Colonic mucosa (tissue), 4 donors: ENCODE measurements at regions of chr12 and their contacts with region 1.

Region 1: GRCh38 chr12:40622246-40622838 is 69.9 kb upstream of the CNTN1 start:
- DNase-seq: peak; percentile 45
- H3K4me3 ChIP-seq: no peak overlapping the region
- H3K27ac ChIP-seq: no peak overlapping the region
- H3K4me1 ChIP-seq: no peaks in the 10 kb centered on the region
- H3K27me3 ChIP-seq: no peaks in the 10 kb centered on the region
- CTCF ChIP-seq: peak; percentile 55

Region 2: GRCh38 chr12:40921563-40922163 is 299.3 kb after region 1 on chr12:
- intact Hi-C with region 1: loop called (anchors 2 kb)
- DNase-seq: no peak
- H3K4me3 ChIP-seq: no peak overlapping the region
- H3K27ac ChIP-seq: no peak overlapping the region
- H3K4me1 ChIP-seq: no peaks in the 10 kb centered on the region
- H3K27me3 ChIP-seq: no peaks in the 10 kb centered on the region
- CTCF ChIP-seq: peak; percentile 69

Region 3: DNA sequence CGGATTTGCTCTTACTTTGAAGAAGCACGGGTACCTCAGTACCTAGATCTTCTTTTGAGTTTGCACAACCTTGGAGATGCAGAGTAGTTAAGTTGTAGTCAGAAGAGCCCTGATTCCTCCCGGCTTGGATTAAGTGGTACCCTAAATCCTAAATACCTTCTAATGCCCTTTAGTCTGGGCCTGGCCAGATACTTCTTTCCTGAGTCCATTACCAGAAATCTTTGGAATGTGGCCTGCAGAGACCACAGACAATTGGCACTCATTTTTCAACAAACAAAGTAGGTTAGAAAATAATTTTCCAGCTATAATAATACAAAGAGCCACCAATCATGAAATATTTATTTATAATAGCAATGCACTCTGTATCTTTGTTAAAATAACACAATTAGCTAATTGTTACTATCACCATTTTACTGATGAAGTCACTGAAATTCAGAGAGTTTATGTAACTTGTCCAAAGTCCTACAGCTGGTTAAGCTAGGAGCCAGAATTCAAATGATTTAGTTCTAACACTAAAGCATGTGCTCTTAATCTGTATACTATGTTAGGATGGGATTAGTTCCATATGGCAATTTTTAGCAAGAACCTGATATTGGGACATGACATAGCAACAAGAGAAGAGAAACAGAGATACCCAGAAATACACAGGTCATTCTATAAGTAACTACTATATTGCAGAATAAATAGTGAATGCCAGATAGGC is 433.7 kb after region 1 on chr12:
- intact Hi-C with region 1: no loop called
- DNase-seq: no peak
- H3K4me3 ChIP-seq: no peak overlapping the region
- H3K27ac ChIP-seq: no peak overlapping the region
- H3K4me1 ChIP-seq: no peaks in the 10 kb centered on the region
- H3K27me3 ChIP-seq: no peaks in the 10 kb centered on the region
- CTCF ChIP-seq: no peak